CD14-positive monocyte (primary cell): ENCODE measurements at regions of chr3 and their contacts with region 1.

Region 1: DNA sequence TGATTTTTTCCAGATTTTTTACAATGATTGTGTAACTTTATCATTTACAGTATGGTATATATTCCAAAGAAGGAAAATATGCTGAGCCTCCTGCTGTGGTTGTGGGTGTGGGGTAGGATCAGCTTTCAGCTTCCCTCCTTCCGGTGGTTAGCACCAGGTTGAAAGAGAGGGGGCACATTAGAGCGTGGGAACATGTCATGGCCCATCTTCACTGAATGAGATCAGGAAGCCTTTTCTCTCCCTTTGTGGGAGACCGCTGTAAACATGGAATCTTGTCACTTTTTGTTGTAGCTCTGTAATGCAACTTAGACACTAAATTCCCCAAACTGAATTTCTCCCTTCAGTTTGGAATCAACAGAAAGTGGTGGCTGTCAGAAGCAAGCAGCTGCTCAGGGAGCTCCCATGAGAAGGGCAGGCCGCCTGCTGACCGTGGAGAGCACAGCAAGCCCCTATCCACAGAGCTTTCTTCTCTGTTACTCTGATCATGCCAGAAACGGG is 86.7 kb upstream of the LIMD1 start:
- DNase-seq: no peak
- H3K4me3 ChIP-seq: no peak overlapping the region
- H3K4me3 Mint-ChIP-seq: no peak overlapping the region
- H3K27ac ChIP-seq: no peak overlapping the region
- H3K27ac Mint-ChIP-seq: no peak overlapping the region
- H3K4me1 ChIP-seq: no peaks in the 10 kb centered on the region
- H3K4me1 Mint-ChIP-seq: no peaks in the 10 kb centered on the region
- H3K27me3 ChIP-seq: no peaks in the 10 kb centered on the region
- H3K27me3 Mint-ChIP-seq: no peaks in the 10 kb centered on the region
- CTCF ChIP-seq: peak; percentile 23

Region 2: GRCh38 chr3:45333549-45333948 is 174.3 kb before region 1 on chr3:
- intact Hi-C with region 1: no loop called
- DNase-seq: no peak
- H3K4me3 ChIP-seq: no peak overlapping the region
- H3K4me3 Mint-ChIP-seq: no peak overlapping the region
- H3K27ac ChIP-seq: no peak overlapping the region
- H3K27ac Mint-ChIP-seq: peak overlapping the region in 3 of 7 donors; percentile 26 to 37 (median 37)
- H3K4me1 ChIP-seq: no peaks in the 10 kb centered on the region
- H3K4me1 Mint-ChIP-seq: no peaks in the 10 kb centered on the region
- H3K27me3 ChIP-seq: no peaks in the 10 kb centered on the region
- H3K27me3 Mint-ChIP-seq: peaks cover 1 to 10% (median 2%) of the 10 kb centered on the region in 3 donors
- CTCF ChIP-seq: no peak

Region 3: DNA sequence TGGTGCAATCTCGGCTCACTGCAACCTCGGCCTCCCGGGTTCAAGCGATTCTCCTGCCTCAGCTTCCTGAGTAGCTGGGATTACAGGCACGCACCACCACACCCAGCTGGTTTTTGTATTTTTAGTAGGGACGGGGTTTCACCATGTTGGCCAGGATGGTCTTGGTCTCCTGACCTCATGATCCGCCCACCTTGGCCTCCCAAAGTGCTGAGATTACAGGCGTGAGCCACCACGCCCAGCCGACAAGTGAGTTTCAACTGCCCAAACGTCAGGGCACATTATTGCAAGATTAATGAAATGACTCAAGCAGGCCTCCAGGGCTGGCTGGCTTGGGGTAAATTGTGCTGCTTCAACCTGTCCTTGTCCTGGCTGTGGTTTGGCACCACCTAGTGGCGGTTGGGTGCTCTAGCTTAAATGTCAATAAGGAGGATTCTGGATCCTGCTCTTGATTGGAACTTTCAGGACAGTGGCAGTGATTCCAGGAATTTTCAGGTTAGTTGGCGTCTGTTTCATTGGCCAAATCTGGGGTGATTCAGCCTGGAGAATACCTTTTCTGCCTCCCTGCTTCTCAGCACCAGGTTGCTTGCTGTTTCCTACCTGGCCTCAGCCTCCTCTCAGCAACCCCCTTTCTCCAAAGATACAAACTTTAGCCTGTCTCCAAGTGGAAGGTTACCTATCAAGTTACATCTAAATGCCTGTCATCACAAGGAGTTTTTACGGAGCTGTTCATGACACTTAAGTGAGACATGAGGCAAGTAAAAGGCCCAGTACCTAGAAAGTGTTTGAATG is 148.9 kb after region 1 on chr3:
- intact Hi-C with region 1: loop called in 1 of 2 experiments (anchors 2 kb)
- DNase-seq: peak; percentile 95 to 97 (median 96)
- H3K4me3 ChIP-seq: no peak overlapping the region
- H3K4me3 Mint-ChIP-seq: peak overlapping the region; percentile 53 to 60
- H3K27ac ChIP-seq: peak overlapping the region; percentile 42 to 65
- H3K27ac Mint-ChIP-seq: peak overlapping the region; percentile 92 to 98 (median 97)
- H3K4me1 ChIP-seq: peaks cover 36 to 40% of the 10 kb centered on the region in 2 donors
- H3K4me1 Mint-ChIP-seq: peaks cover 46% of the 10 kb centered on the region
- H3K27me3 ChIP-seq: no peaks in the 10 kb centered on the region
- H3K27me3 Mint-ChIP-seq: no peaks in the 10 kb centered on the region
- CTCF ChIP-seq: peak; percentile 85

Region 4: GRCh38 chr3:45665101-45665572 is 157.3 kb after region 1 on chr3:
- intact Hi-C with region 1: loop called (anchors 2 kb)
- DNase-seq: peak in 2 of 3 donors; percentile 50 to 55
- H3K4me3 ChIP-seq: peak overlapping the region in 1 of 3 experiments; percentile 58
- H3K4me3 Mint-ChIP-seq: peak overlapping the region in 1 of 2 donors; percentile 77
- H3K27ac ChIP-seq: peak overlapping the region in 1 of 2 donors; percentile 37
- H3K27ac Mint-ChIP-seq: peak overlapping the region in 6 of 7 donors; percentile 15 to 92 (median 52)
- H3K4me1 ChIP-seq: peaks cover 10 to 14% of the 10 kb centered on the region in 2 donors
- H3K4me1 Mint-ChIP-seq: peaks cover 15% of the 10 kb centered on the region
- H3K27me3 ChIP-seq: no peaks in the 10 kb centered on the region
- H3K27me3 Mint-ChIP-seq: peaks cover 0 to 1% (median 0%) of the 10 kb centered on the region in 3 donors
- CTCF ChIP-seq: peak; percentile 72

Region 5: GRCh38 chr3:46065294-46065721 is 557.4 kb after region 1 on chr3:
- intact Hi-C with region 1: no loop called
- DNase-seq: no peak
- H3K4me3 ChIP-seq: no peak overlapping the region
- H3K4me3 Mint-ChIP-seq: no peak overlapping the region
- H3K27ac ChIP-seq: no peak overlapping the region
- H3K27ac Mint-ChIP-seq: no peak overlapping the region
- H3K4me1 ChIP-seq: peaks cover 34 to 35% of the 10 kb centered on the region in 2 donors
- H3K4me1 Mint-ChIP-seq: peaks cover 42% of the 10 kb centered on the region
- H3K27me3 ChIP-seq: no peaks in the 10 kb centered on the region
- H3K27me3 Mint-ChIP-seq: peaks cover 3 to 7% (median 6%) of the 10 kb centered on the region in 3 donors
- CTCF ChIP-seq: no peak